Colonic mucosa (tissue), 4 donors: ENCODE measurements at regions of chr4 and their contacts with region 1.

Region 1: GRCh38 chr4:168923526-168924194 is 86.4 kb downstream of the CBR4 start:
- DNase-seq: peak; percentile 73
- H3K4me3 ChIP-seq: no peak overlapping the region
- H3K27ac ChIP-seq: no peak overlapping the region
- H3K4me1 ChIP-seq: no peaks in the 10 kb centered on the region
- H3K27me3 ChIP-seq: no peaks in the 10 kb centered on the region
- CTCF ChIP-seq: peak; percentile 57

Region 2: DNA sequence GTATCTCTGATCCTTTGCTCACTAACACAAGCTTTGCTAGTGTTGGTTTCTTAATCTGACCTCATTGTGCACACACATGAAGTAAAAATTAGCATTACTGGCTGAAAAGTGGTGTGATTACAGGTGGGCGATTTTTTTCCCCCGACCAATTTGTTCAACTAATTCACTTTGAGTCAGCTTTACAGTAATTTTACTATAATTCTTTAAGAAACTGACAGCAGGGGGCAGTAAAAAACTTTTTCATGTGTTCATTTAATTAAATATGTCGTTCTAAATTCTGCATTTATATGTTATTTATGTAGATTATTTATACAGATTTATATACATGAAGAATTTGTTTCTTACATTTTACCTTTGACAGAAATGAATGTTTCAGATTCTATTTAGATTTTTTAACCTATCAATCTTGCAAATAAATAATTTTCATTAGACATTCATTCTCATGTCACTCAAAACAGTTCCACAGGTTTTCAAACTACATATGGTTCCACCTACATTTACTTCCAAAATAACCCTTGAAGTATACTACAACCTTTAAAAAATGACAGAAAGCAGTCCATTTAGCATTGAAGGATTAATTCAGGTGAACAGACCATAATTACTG is 409.3 kb before region 1 on chr4:
- intact Hi-C with region 1: loop called (anchors 10 kb)
- DNase-seq: no peak
- H3K4me3 ChIP-seq: no peak overlapping the region
- H3K27ac ChIP-seq: no peak overlapping the region
- H3K4me1 ChIP-seq: no peaks in the 10 kb centered on the region
- H3K27me3 ChIP-seq: no peaks in the 10 kb centered on the region
- CTCF ChIP-seq: peak; percentile 41

Region 3: GRCh38 chr4:168995537-168996295 is 72.1 kb after region 1 on chr4:
- intact Hi-C with region 1: loop called (anchors 5 kb)
- DNase-seq: no peak
- H3K4me3 ChIP-seq: no peak overlapping the region
- H3K27ac ChIP-seq: no peak overlapping the region
- H3K4me1 ChIP-seq: no peaks in the 10 kb centered on the region
- H3K27me3 ChIP-seq: no peaks in the 10 kb centered on the region
- CTCF ChIP-seq: no peak